Activated T-helper 2 cell treated with anti-CD3 and anti-CD28 coated beads, Interferon-gamma antibody, Interleukin-2, Interleukin-4, amounts not matched to agents 10 μg/mL and 5 μg/mL and 100 μg/mL, durations not matched to agents 14 hours and 24 hours and 36 hours (primary cell): ENCODE measurements at regions of chr15 and their contacts with region 1.

Region 1: GRCh38 chr15:85543741-85544155 is 163.3 kb downstream of the AKAP13 start:
- DNase-seq: peak; percentile 31
- H3K4me3 Mint-ChIP-seq: peak overlapping the region; percentile 55
- H3K27ac Mint-ChIP-seq: peak overlapping the region; percentile 69
- H3K4me1 Mint-ChIP-seq: peaks cover 77% of the 10 kb centered on the region
- H3K27me3 Mint-ChIP-seq: no peaks in the 10 kb centered on the region

Region 2: DNA sequence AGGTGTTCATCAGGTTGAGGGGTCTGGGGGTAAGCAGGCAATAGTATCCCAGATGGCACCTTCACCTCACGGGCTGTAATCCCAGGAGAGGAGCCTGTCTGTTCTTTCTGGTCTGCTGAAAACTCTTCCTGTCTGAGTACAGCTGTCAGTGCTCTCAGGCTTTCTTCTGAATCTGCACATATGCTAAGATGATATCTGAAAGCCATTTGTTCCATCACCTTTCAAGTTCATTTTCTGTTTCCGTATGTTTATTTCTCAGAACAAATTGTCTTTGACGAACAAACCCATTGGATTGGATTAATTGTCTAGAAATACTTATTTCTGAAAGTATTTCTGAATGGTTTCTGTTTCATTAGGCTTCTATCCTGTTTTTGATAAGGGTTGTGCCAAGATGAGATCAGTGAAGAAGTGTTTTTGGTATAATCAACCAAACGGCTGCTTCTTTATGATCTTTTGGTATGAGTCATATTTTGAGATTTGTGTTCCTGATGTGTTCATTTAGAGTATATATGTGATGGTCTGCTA is 782.1 kb before region 1 on chr15:
- intact Hi-C with region 1: loop called (anchors 5 kb)
- DNase-seq: no peak
- H3K4me3 Mint-ChIP-seq: no peak overlapping the region
- H3K27ac Mint-ChIP-seq: no peak overlapping the region
- H3K4me1 Mint-ChIP-seq: peaks cover 30% of the 10 kb centered on the region
- H3K27me3 Mint-ChIP-seq: no peaks in the 10 kb centered on the region

Region 3: GRCh38 chr15:85485956-85486567 is 57.7 kb before region 1 on chr15:
- intact Hi-C with region 1: loop called (anchors 2 kb)
- DNase-seq: peak; percentile 40
- H3K4me3 Mint-ChIP-seq: no peak overlapping the region
- H3K27ac Mint-ChIP-seq: no peak overlapping the region
- H3K4me1 Mint-ChIP-seq: peaks cover 60% of the 10 kb centered on the region
- H3K27me3 Mint-ChIP-seq: no peaks in the 10 kb centered on the region

Region 4: GRCh38 chr15:85597155-85597815 is 53.5 kb after region 1 on chr15:
- intact Hi-C with region 1: loop called (anchors 5 kb)
- DNase-seq: no peak
- H3K4me3 Mint-ChIP-seq: peak overlapping the region; percentile 45
- H3K27ac Mint-ChIP-seq: peak overlapping the region; percentile 55
- H3K4me1 Mint-ChIP-seq: peaks cover 39% of the 10 kb centered on the region
- H3K27me3 Mint-ChIP-seq: no peaks in the 10 kb centered on the region

Region 5: DNA sequence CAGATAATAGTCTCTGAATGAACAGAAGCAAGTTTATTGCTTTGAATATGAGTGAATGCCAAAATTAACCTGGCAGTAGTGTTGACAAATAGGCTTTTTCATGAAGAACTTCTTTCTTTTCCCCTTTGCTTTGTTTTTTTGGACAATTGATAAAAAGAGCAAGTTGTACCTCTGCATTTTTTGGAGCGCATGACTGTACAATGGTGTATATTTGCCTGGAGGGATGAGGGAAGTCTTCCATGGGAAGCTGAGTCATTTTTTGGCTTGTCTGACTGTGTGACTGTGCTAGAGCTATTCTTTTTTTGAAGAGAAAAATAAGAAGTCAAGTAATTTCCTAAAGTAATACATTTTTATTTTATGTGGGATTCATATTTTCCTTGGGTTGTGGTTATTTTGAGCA is 64.1 kb after region 1 on chr15:
- intact Hi-C with region 1: no loop called
- DNase-seq: no peak
- H3K4me3 Mint-ChIP-seq: no peak overlapping the region
- H3K27ac Mint-ChIP-seq: peak overlapping the region; percentile 68
- H3K4me1 Mint-ChIP-seq: peaks cover 26% of the 10 kb centered on the region
- H3K27me3 Mint-ChIP-seq: no peaks in the 10 kb centered on the region

Region 6: GRCh38 chr15:85723960-85724945 is 180.5 kb after region 1 on chr15:
- intact Hi-C with region 1: loop called (anchors 5 kb)
- DNase-seq: no peak
- H3K4me3 Mint-ChIP-seq: peak overlapping the region; percentile 58
- H3K27ac Mint-ChIP-seq: peak overlapping the region; percentile 91
- H3K4me1 Mint-ChIP-seq: peaks cover 39% of the 10 kb centered on the region
- H3K27me3 Mint-ChIP-seq: no peaks in the 10 kb centered on the region